ENCODE measurements at regions of chr14 and their contacts with region 1.

Region 1: GRCh38 chr14:95157327-95158189 is at the start of gene DICER1:
- DNase-seq: peak; percentile 94
- H3K4me3 Mint-ChIP-seq: peak within 1 kb of the TSS; percentile 91
- H3K27ac Mint-ChIP-seq: peak within 1 kb of the TSS; percentile 98
- H3K4me1 Mint-ChIP-seq: peaks cover 28% of the 10 kb centered on the region
- H3K27me3 Mint-ChIP-seq: no peaks in the 10 kb centered on the region
- CTCF ChIP-seq: no peak
- total RNA-seq, gene DICER1: 35.6 and 48.6 TPM in 2 replicates

Region 2: DNA sequence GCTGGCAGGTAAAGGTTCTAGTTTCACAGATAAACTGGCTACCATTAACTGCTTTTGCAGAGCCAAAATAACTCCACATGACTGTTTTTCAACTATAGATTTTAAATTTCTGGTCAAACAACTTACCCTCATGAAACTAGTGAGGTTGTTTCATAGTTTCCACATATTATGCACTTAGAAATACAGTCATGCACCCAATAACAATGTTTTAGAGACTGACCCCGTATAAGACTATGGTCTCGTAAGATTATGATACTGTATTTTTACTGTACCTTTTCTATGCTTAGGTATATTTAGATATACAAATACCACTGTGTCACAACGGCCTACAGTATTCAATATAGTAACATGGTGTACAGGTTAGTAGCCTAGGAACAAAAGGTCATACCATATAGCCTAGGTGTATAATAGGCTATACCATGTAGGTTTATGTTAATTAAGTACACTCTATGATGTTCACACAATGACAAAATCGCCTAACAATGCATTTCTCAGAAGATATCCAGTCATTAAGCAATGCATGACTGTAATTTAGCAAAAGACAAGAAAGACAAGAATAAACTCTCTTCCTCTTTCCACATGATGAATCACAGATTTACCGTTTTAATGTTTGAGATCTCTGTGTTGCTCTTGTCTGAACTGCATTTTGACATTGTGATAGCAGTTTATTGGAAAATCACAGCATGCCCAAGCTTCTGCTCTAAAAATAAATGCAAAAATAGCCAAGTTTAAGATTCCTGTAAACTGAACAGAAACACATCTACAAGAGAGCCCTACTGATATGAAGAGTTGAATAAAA is 17.3 kb before region 1 on chr14:
- CTCF ChIA-PET with region 1: no interaction called
- POLR2A ChIA-PET with region 1: interaction called, 12 read pairs
- intact Hi-C with region 1: no loop called
- DNase-seq: peak; percentile 65
- H3K4me3 Mint-ChIP-seq: peak overlapping the region; percentile 26
- H3K27ac Mint-ChIP-seq: peak overlapping the region; percentile 61
- H3K4me1 Mint-ChIP-seq: peaks cover 32% of the 10 kb centered on the region
- H3K27me3 Mint-ChIP-seq: no peaks in the 10 kb centered on the region
- CTCF ChIP-seq: no peak

Region 3: DNA sequence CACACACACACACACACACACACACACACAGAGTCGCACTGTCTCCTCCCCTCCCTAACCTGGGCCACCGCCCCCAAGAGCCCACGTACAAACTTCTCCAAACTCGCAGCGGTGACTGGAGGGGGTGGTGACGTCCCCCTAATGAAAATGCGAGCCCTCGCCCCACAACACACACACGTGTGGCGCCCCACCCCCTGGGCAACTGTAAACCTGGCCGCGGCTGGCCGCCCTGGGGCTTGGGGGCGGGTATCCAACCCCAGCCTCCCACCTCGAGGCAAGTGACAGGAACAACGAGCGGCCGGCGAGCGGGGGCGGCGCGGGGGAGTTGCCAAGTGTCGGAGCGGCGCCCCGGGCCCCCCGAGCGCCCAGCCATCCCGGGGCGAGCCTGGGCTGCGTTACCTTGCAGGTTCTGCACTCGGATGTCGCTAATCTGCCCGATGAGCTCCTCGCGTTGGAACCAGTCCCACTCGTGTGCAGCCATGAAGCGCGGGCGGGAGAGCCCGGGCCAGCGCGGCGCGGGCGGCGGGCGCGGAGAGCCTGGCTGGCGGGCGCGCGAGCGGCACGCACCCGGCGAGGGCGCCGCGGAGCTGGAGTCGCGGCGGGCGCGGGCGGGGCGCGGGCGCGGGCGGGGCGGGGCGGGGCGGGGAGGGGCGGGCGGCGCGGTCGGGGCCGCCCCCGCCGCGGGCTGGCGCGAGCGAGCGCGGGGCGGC is 161.9 kb after region 1 on chr14 and contains the start of gene CLMN:
- CTCF ChIA-PET with region 1: interaction called, 3 read pairs
- POLR2A ChIA-PET with region 1: interaction called, 4 read pairs
- intact Hi-C with region 1: loop called (anchors 5 kb)
- DNase-seq: peak; percentile 34
- H3K4me3 Mint-ChIP-seq: peak within 1 kb of the TSS; percentile 84
- H3K27ac Mint-ChIP-seq: peak within 1 kb of the TSS; percentile 35
- H3K4me1 Mint-ChIP-seq: peaks cover 63% of the 10 kb centered on the region
- H3K27me3 Mint-ChIP-seq: no peaks in the 10 kb centered on the region
- CTCF ChIP-seq: no peak
- total RNA-seq, gene CLMN: 15.7 and 17.9 TPM in 2 replicates

Region 4: DNA sequence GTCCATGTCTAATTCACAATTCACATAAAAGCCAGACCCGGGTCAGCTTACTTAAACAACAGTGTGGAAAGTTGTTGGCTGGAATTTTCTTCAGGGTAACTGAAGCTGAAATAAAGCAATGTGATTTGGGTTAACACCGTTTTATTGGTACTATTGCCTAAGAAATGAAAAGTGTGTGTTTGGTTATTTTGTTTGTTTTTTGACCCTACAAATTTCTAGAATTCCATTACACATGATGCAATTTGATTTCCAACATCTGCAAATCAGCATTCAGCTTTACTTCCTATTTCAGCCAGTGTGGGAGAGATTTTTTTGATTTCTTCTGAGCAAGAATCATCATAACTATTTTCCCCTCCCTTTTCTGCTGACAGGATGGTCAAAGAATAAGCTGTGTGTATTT is 207.8 kb after region 1 on chr14:
- CTCF ChIA-PET with region 1: no interaction called
- POLR2A ChIA-PET with region 1: no interaction called
- intact Hi-C with region 1: loop called (anchors 5 kb)
- DNase-seq: peak; percentile 11
- H3K4me3 Mint-ChIP-seq: no peak overlapping the region
- H3K27ac Mint-ChIP-seq: no peak overlapping the region
- H3K4me1 Mint-ChIP-seq: peaks cover 25% of the 10 kb centered on the region
- H3K27me3 Mint-ChIP-seq: no peaks in the 10 kb centered on the region
- CTCF ChIP-seq: no peak

Measured in MCF 10A (cell line).